B cell (primary cell): ENCODE measurements at regions of chr22 and their contacts with region 1.

Region 1: GRCh38 chr22:46116491-46116958 is 33.8 kb upstream of the PPARA start:
- DNase-seq: peak; percentile 91
- ATAC-seq: peak; percentile 98
- H3K4me3 ChIP-seq: no peak overlapping the region
- H3K4me3 Mint-ChIP-seq: no peak overlapping the region
- H3K27ac ChIP-seq: no peak overlapping the region
- H3K27ac Mint-ChIP-seq: no peak overlapping the region
- H3K4me1 ChIP-seq: peaks cover 0 to 8% of the 10 kb centered on the region in 2 donors
- H3K4me1 Mint-ChIP-seq: no peaks in the 10 kb centered on the region
- H3K27me3 ChIP-seq: no peaks in the 10 kb centered on the region
- H3K27me3 Mint-ChIP-seq: no peaks in the 10 kb centered on the region
- CTCF ChIP-seq: peak; percentile 87

Region 2: GRCh38 chr22:46006379-46007002 is 110.0 kb before region 1 on chr22:
- CTCF ChIA-PET with region 1: interaction called, 533 read pairs
- POLR2A ChIA-PET with region 1: interaction called, 6 read pairs
- intact Hi-C with region 1: loop called (anchors 1 kb)
- DNase-seq: peak; percentile 88
- ATAC-seq: peak; percentile 90
- H3K4me3 ChIP-seq: no peak overlapping the region
- H3K4me3 Mint-ChIP-seq: no peak overlapping the region
- H3K27ac ChIP-seq: no peak overlapping the region
- H3K27ac Mint-ChIP-seq: no peak overlapping the region
- H3K4me1 ChIP-seq: peaks cover 3 to 10% of the 10 kb centered on the region in 2 donors
- H3K4me1 Mint-ChIP-seq: peaks cover 6% of the 10 kb centered on the region
- H3K27me3 ChIP-seq: peaks cover 0 to 13% (median 0%) of the 10 kb centered on the region in 4 experiments
- H3K27me3 Mint-ChIP-seq: no peaks in the 10 kb centered on the region
- CTCF ChIP-seq: peak; percentile 90

Region 3: DNA sequence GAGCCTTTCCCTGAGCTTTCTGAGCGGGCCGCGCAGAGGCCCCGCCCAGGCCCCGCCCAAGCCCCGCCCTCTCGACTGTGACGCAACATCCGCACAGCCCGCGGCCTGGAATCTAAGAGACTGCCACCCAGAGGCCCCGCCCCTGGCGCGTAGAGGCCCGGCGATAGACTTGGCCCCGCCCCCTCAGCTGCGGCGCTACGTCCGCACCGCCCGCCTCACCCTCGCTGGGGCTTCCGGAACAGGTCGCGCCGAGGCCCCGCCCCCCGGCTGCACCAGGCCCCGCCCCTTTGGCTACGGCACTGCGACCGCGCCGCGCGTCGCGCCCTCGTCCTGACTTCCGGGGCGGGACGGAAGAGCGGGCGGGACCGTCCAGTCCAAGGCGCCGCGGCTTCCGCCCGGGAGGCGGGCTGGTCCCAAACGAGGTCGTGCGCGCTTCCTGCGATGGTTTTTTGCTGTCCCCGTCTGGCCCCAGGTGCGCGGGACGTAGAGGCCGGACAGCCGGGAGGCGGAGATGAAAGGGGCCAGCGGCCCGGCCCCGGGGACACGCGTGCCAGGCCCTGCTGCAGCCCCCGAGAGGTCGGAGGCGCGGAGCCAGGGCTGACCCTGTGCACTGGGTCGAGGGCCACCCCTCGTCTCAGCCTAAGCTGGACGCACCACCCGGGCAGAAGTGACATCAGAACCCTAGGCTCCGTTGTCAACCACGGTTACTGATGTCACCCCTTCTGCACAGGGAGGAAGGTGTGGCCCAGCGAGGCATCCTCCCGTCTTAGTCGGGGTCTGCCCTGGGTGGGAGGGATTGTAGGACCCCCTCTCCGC is 80.6 kb before region 1 on chr22:
- CTCF ChIA-PET with region 1: interaction called, 9 read pairs
- POLR2A ChIA-PET with region 1: no interaction called
- intact Hi-C with region 1: loop called (anchors 1 kb)
- DNase-seq: peak; percentile 100
- ATAC-seq: peak; percentile 92
- H3K4me3 ChIP-seq: peak overlapping the region; percentile 47 to 94 (median 87)
- H3K4me3 Mint-ChIP-seq: peak overlapping the region; percentile 87
- H3K27ac ChIP-seq: peak overlapping the region; percentile 90
- H3K27ac Mint-ChIP-seq: peak overlapping the region; percentile 95
- H3K4me1 ChIP-seq: peaks cover 15 to 16% of the 10 kb centered on the region in 2 donors
- H3K4me1 Mint-ChIP-seq: peaks cover 18% of the 10 kb centered on the region
- H3K27me3 ChIP-seq: no peaks in the 10 kb centered on the region
- H3K27me3 Mint-ChIP-seq: no peaks in the 10 kb centered on the region
- CTCF ChIP-seq: no peak

Region 4: DNA sequence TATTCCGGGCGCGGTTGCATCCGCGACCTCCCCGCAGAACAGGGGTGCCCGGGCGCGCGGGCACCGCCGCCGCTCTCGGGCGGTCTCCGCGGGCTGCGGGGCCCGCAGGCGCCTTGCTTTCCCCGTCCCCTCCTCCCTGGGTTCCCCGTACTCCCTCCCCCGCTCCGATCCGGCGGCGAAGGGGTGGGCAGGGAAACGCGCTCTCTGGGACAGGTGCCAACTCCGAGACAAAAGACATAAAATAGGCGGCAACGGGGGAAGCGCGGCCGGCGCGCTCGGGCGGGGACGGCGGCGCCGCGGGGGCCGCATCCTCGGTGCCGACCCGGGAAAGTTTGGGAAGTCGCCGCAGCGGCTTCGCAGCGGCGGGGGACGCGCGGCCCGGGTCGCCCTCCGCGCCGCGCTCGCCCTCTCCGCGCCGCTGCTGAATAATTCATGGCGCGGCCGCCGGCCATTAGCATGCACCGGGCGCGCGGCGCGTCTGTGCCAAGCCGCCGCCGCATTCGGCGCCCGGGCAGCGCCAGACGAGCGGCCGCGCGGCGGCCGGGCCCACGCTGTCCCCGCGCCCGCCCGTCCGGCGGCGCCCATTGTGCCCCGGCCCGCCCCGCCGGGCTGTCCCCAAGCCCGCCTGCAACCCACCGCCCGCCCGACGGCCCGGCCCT is 44.9 kb before region 1 on chr22:
- CTCF ChIA-PET with region 1: interaction called, 3 read pairs
- POLR2A ChIA-PET with region 1: interaction called, 11 read pairs
- intact Hi-C with region 1: loop called (anchors 5 kb)
- DNase-seq: peak; percentile 72
- ATAC-seq: peak; percentile 7
- H3K4me3 ChIP-seq: peak overlapping the region in 4 of 5 experiments; percentile 31 to 70 (median 66)
- H3K4me3 Mint-ChIP-seq: peak overlapping the region; percentile 89
- H3K27ac ChIP-seq: no peak overlapping the region
- H3K27ac Mint-ChIP-seq: peak overlapping the region; percentile 81
- H3K4me1 ChIP-seq: peaks cover 22 to 29% of the 10 kb centered on the region in 2 donors
- H3K4me1 Mint-ChIP-seq: peaks cover 32% of the 10 kb centered on the region
- H3K27me3 ChIP-seq: peaks cover 0 to 2% (median 0%) of the 10 kb centered on the region in 4 experiments
- H3K27me3 Mint-ChIP-seq: peaks cover 4% of the 10 kb centered on the region
- CTCF ChIP-seq: no peak